ENCODE measurements at regions of chrX and their contacts with region 1.

Region 1: DNA sequence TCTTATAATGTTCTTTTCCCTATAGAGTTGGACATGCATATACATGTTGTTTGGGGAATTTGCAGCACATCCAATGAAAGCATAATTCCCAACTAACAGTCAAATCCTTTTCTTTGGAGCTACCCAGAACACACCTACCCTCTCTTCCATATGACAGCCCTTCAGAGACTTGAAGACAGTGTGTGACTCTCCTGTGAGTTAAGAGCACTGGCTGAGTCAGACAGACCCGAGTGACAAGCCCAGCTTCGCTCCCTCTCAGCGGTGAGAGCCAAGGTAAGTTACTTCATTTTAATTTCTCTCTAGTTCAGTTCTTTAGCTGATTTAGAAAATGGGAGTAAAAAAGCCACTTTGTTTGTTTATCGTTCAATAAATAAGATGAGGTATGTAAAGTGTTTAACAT is 86.3 kb downstream of the RTL9 start:
- DNase-seq: no peak
- H3K4me3 ChIP-seq: no peak overlapping the region
- H3K27ac ChIP-seq: no peak overlapping the region
- H3K4me1 ChIP-seq: no peaks in the 10 kb centered on the region
- H3K27me3 ChIP-seq: no peaks in the 10 kb centered on the region
- CTCF ChIP-seq: no peak
- POLR2A ChIP-seq: no peak

Region 2: DNA sequence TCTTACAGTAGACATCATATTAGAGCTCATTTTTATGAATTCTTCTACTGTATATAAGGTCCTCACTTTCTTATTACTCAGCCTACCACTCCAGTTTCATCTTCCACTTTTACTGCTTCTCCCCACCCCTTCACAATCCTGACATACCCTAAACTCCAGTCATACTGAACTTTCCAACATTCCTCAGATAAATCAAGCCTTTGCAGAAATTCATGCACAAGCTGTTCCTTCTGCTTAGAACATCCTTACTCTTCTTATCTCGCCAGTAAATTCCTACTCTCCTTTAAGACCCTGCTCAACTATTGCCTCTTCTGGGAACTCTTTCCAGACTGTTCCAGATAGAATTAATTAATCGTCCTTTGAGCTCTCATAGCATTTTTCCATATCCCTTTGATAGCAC is 61.6 kb before region 1 on chrX:
- intact Hi-C with region 1: no loop called
- DNase-seq: no peak
- H3K4me3 ChIP-seq: no peak overlapping the region
- H3K27ac ChIP-seq: no peak overlapping the region
- H3K4me1 ChIP-seq: no peaks in the 10 kb centered on the region
- H3K27me3 ChIP-seq: no peaks in the 10 kb centered on the region
- CTCF ChIP-seq: no peak
- POLR2A ChIP-seq: no peak

Region 3: DNA sequence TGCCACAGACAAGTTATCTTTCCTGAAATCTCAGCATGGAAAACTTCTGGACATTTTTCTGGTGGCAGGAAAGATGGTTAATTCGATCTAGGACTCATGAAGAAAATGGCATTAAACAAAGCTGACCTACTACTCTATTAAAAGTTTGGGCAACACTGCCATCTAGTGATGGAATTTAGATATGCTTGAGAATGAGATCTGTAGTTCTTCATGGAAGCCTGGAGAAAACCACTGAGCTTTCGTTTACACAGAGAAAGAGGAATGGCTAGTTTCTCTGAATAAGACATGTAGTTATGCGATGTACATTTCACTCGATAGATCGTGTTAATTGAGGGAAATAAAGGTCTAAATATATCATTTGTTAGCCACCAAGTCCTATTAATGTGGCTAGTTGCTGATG is 402.3 kb after region 1 on chrX:
- intact Hi-C with region 1: loop called (anchors 5 kb)
- DNase-seq: no peak
- H3K4me3 ChIP-seq: no peak overlapping the region
- H3K27ac ChIP-seq: no peak overlapping the region
- H3K4me1 ChIP-seq: no peaks in the 10 kb centered on the region
- H3K27me3 ChIP-seq: no peaks in the 10 kb centered on the region
- CTCF ChIP-seq: peak; percentile 25 to 63 (median 48)
- POLR2A ChIP-seq: no peak

Region 4: GRCh38 chrX:111086591-111087006 is 641.6 kb after region 1 on chrX:
- intact Hi-C with region 1: no loop called
- DNase-seq: no peak
- H3K4me3 ChIP-seq: no peak overlapping the region
- H3K27ac ChIP-seq: no peak overlapping the region
- H3K4me1 ChIP-seq: no peaks in the 10 kb centered on the region
- H3K27me3 ChIP-seq: no peaks in the 10 kb centered on the region
- CTCF ChIP-seq: no peak
- POLR2A ChIP-seq: no peak

Measured in vagina (tissue), 2 donors.